GM12878 (cell line): ENCODE measurements at regions of chr1 and their contacts with region 1.

Region 1: GRCh38 chr1:40232444-40232843 is 15.3 kb upstream of the TMCO2 start:
- DNase-seq: peak; percentile 94
- ATAC-seq: peak; percentile 99
- H3K4me3 ChIP-seq: no peak overlapping the region
- H3K27ac ChIP-seq: peak overlapping the region; percentile 36
- H3K4me1 ChIP-seq: peaks cover 32% of the 10 kb centered on the region
- H3K27me3 ChIP-seq: no peaks in the 10 kb centered on the region
- CTCF ChIP-seq: no peak
- EP300 ChIP-seq: peak in 1 of 2 experiments; percentile 34; a peak in 1 of 4 replicates
- POLR2A ChIP-seq: no peak
- RAD21 ChIP-seq: no peak

Region 2: GRCh38 chr1:40079774-40080400 is 152.6 kb before region 1 on chr1:
- CTCF ChIA-PET with region 1: no interaction called
- POLR2A ChIA-PET with region 1: no interaction called
- RAD21 ChIA-PET with region 1: no interaction called
- SMC1A ChIA-PET with region 1: no interaction called
- in situ Hi-C with region 1: no loop called
- intact Hi-C with region 1: no loop called
- DNase-seq: no peak
- ATAC-seq: no peak
- H3K4me3 ChIP-seq: no peak overlapping the region
- H3K27ac ChIP-seq: no peak overlapping the region
- H3K4me1 ChIP-seq: no peaks in the 10 kb centered on the region
- H3K27me3 ChIP-seq: no peaks in the 10 kb centered on the region
- CTCF ChIP-seq: no peak
- EP300 ChIP-seq: no peak
- POLR2A ChIP-seq: no peak
- RAD21 ChIP-seq: no peak

Region 3: DNA sequence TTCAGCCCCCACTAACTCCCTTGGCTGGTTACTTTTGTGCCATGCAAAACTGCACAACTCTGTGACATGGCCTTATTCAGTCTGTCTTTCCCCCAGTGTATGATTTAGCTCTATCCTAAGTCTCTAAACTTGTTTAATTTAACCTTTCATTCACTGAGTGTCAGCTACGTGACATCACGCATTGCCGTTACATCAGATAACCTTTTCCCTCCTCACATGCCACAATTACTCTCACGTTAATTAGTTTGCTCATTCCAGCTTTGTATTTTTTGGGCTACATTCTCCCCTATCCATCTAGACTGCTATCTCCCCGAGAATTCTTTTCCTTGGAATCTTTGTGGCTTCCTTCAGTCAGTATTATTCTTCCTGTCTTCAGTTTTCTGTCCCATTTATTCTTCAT is 14.1 kb before region 1 on chr1:
- CTCF ChIA-PET with region 1: interaction called, 3 read pairs
- POLR2A ChIA-PET with region 1: no interaction called
- RAD21 ChIA-PET with region 1: interaction called, 4 read pairs
- SMC1A ChIA-PET with region 1: interaction called, 30 read pairs
- in situ Hi-C with region 1: no loop called
- intact Hi-C with region 1: no loop called
- DNase-seq: no peak
- ATAC-seq: no peak
- H3K4me3 ChIP-seq: no peak overlapping the region
- H3K27ac ChIP-seq: no peak overlapping the region
- H3K4me1 ChIP-seq: peaks cover 12% of the 10 kb centered on the region; the same call in 1 of the 2 replicates
- H3K27me3 ChIP-seq: no peaks in the 10 kb centered on the region
- CTCF ChIP-seq: no peak
- EP300 ChIP-seq: no peak
- POLR2A ChIP-seq: no peak
- RAD21 ChIP-seq: no peak